Activated T-helper 2 cell treated with anti-CD3 and anti-CD28 coated beads, Interferon-gamma antibody, Interleukin-2, Interleukin-4, amounts not matched to agents 10 μg/mL and 5 μg/mL and 100 μg/mL, durations not matched to agents 14 hours and 24 hours and 36 hours (primary cell): ENCODE measurements at regions of chr6 and their contacts with region 1.

Region 1: DNA sequence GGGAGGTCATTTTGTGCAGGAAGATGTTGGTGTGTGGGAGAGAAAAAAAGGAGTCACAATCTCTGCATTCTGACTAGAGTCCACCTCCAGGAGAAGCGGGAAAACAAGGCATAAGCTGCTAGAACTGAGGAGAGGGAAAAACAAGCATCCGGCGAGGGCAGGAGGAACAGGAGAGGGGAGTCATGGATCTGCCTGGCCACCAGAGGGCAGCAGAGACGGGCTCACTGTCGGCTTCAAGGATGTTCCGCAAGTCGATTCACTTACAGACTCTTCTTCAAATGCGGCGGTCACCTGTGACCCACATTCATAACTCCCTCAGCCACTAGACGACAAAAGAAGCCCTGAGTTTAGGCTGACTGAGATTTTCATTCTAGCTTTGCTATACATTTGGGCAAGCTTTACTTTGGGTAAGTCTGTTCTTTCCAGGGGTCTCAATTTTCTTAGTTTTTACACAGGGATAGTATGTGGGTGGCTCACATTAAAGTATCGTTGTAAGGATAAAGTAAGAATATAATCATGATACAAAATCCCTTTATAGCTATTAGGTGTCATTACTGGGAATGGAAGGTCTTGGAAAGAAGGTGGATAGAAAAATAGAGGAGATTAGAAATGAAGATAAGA is 6.6 kb upstream of the BTNL2 start:
- DNase-seq: peak; percentile 67
- H3K4me3 Mint-ChIP-seq: no peak overlapping the region
- H3K27ac Mint-ChIP-seq: no peak overlapping the region
- H3K4me1 Mint-ChIP-seq: peaks cover 10% of the 10 kb centered on the region
- H3K27me3 Mint-ChIP-seq: peaks cover 49% of the 10 kb centered on the region

Region 2: DNA sequence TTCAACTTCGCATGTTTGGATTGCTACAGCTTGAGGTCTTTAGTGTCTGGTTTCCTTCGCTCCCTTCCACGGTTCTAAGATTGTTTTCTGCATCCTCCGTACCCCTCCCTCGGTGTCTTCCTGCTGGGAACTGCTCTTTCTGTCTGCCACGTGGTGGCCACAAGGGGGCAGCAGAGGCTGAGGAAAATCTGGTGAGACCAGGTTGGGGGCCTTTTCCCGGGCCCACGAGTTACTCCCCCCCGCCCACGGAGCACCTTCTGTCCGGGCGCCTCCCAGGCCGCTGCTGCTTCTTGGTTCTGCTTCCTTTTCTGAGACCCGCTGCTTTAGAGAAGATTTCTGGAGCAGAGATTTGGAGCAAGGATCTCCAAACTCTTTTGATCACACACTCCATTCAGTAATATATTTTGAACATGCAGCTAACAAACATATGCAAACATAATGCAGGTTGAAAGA is 168.6 kb before region 1 on chr6:
- intact Hi-C with region 1: loop called (anchors 10 kb)
- DNase-seq: peak; percentile 51
- H3K4me3 Mint-ChIP-seq: peak overlapping the region; percentile 23
- H3K27ac Mint-ChIP-seq: no peak overlapping the region
- H3K4me1 Mint-ChIP-seq: peaks cover 18% of the 10 kb centered on the region
- H3K27me3 Mint-ChIP-seq: peaks cover 24% of the 10 kb centered on the region

Region 3: GRCh38 chr6:32355018-32355417 is 58.5 kb before region 1 on chr6:
- intact Hi-C with region 1: no loop called
- DNase-seq: no peak
- H3K4me3 Mint-ChIP-seq: no peak overlapping the region
- H3K27ac Mint-ChIP-seq: peak overlapping the region; percentile 12
- H3K4me1 Mint-ChIP-seq: peaks cover 10% of the 10 kb centered on the region
- H3K27me3 Mint-ChIP-seq: peaks cover 21% of the 10 kb centered on the region

Region 4: GRCh38 chr6:32700391-32701040 is 287.0 kb after region 1 on chr6:
- intact Hi-C with region 1: loop called (anchors 1 kb)
- DNase-seq: no peak
- H3K4me3 Mint-ChIP-seq: no peak overlapping the region
- H3K27ac Mint-ChIP-seq: no peak overlapping the region
- H3K4me1 Mint-ChIP-seq: peaks cover 4% of the 10 kb centered on the region
- H3K27me3 Mint-ChIP-seq: peaks cover 64% of the 10 kb centered on the region

Region 5: GRCh38 chr6:32796848-32797776 is 383.6 kb after region 1 on chr6:
- intact Hi-C with region 1: loop called (anchors 1 kb)
- DNase-seq: peak; percentile 54
- H3K4me3 Mint-ChIP-seq: peak overlapping the region; percentile 22
- H3K27ac Mint-ChIP-seq: no peak overlapping the region
- H3K4me1 Mint-ChIP-seq: peaks cover 17% of the 10 kb centered on the region
- H3K27me3 Mint-ChIP-seq: peaks cover 55% of the 10 kb centered on the region